Right cardiac atrium (tissue), 5 donors: ENCODE measurements at regions of chr1 and their contacts with region 1.

Region 1: DNA sequence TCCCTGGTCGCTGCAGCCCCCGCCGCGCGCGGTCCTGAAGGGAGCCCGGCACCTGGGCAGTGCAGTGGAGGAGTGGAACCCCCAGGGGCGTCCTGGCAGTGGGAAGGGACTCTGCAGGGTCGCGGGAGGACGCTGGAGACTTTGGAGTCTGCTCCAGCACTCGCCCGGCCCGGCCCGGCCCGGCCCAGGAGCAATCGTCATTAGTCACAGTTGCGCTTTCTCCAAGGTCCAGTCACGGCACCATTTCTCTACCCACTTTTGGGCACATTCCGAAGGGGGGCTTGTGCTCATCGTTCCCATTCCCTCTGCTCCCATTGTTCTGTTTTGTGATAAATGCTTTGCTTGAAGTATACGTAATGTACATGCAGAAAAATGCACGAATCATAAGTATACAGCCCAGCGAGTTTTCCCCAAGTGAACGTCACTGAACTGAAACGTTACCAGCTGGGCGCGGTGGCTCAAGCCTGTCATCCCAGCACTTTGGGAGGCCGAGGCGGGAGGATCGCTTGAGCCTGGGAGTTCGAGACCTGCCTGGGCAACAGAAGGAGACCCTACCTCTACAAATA is 999 bp downstream of the THAP3 start:
- DNase-seq: peak in 1 of 3 donors; percentile 68
- ATAC-seq: peak; percentile 15 to 27
- H3K4me3 ChIP-seq: peak overlapping the region; percentile 90
- H3K27ac ChIP-seq: peak overlapping the region; percentile 46
- H3K4me1 ChIP-seq: peaks cover 2% of the 10 kb centered on the region
- H3K27me3 ChIP-seq: no peaks in the 10 kb centered on the region

Region 2: GRCh38 chr1:6601049-6601922 is 24.4 kb before region 1 on chr1:
- intact Hi-C with region 1: loop called in 1 of 4 experiments (anchors 2 kb)
- DNase-seq: peak; percentile 75 to 87 (median 87)
- ATAC-seq: peak; percentile 40 to 47
- H3K4me3 ChIP-seq: peak overlapping the region; percentile 73
- H3K27ac ChIP-seq: peak overlapping the region; percentile 92
- H3K4me1 ChIP-seq: peaks cover 21% of the 10 kb centered on the region
- H3K27me3 ChIP-seq: no peaks in the 10 kb centered on the region

Region 3: GRCh38 chr1:6948861-6949260 is 323.2 kb after region 1 on chr1:
- intact Hi-C with region 1: no loop called
- DNase-seq: no peak
- ATAC-seq: peak in 1 of 2 donors; percentile 32
- H3K4me3 ChIP-seq: no peak overlapping the region
- H3K27ac ChIP-seq: no peak overlapping the region
- H3K4me1 ChIP-seq: no peaks in the 10 kb centered on the region
- H3K27me3 ChIP-seq: no peaks in the 10 kb centered on the region